Panc1 (cell line): ENCODE measurements at regions of chr16 and their contacts with region 1.

Region 1: GRCh38 chr16:85601730-85602401 is 11.3 kb upstream of the GSE1 start:
- DNase-seq: no peak
- ATAC-seq: peak; percentile 56
- H3K4me3 ChIP-seq: no peak overlapping the region
- H3K27ac ChIP-seq: peak overlapping the region; percentile 85
- H3K4me1 ChIP-seq: peaks cover 71% of the 10 kb centered on the region
- H3K27me3 ChIP-seq: no peaks in the 10 kb centered on the region
- CTCF ChIP-seq: no peak

Region 2: GRCh38 chr16:85420501-85421337 is 181.1 kb before region 1 on chr16:
- CTCF ChIA-PET with region 1: no interaction called
- POLR2A ChIA-PET with region 1: interaction called, 20 read pairs
- in situ Hi-C with region 1: no loop called
- intact Hi-C with region 1: no loop called
- DNase-seq: no peak
- ATAC-seq: peak; percentile 79
- H3K4me3 ChIP-seq: no peak overlapping the region
- H3K27ac ChIP-seq: no peak overlapping the region
- H3K4me1 ChIP-seq: peaks cover 3% of the 10 kb centered on the region; the same call in 1 of the 2 replicates
- H3K27me3 ChIP-seq: no peaks in the 10 kb centered on the region
- CTCF ChIP-seq: peak; percentile 100